Dorsolateral prefrontal cortex (tissue), 120 donors: ENCODE measurements at regions of chr11 and their contacts with region 1.

Region 1: DNA sequence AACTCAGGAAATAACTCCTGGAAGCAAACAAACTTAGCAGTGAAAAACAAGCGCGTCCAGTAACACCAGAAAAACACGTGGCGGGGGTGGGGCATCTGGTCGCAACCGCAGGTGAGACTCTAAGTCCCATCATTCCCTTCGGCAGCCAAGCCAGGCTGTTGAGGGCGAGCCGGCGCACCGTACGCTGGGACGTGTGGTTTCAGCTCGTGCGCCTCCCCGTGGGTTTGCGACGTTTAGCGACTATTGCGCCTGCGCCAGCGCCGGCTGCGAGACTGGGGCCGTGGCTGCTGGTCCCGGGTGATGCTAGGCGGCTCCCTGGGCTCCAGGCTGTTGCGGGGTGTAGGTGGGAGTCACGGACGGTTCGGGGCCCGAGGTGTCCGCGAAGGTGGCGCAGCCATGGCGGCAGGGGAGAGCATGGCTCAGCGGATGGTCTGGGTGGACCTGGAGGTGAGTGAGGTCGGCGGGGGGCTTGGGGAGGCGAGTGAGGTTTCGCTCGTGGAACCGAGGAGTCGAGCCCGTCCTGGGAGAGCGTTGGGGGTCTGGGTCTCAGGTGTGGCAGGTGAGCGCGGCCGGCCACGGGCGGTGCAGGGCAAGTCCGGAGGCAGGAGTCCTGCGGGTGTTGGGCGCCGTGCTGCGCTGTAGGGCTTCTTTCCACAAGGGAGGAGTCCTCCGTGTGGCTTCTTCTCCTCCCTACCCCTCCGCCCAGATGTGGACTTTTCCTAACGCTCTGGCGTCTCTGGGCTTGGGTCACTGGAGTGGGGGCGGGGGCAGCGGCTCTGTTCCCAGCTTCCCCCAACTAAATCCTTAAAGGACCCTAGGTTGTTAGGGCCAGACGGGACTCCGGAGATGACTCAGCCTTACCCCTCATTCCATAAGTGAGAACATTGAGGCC is at the start of gene REXO2:
- DNase-seq: peak; percentile 92 to 97 (median 96)
- H3K4me3 ChIP-seq: peak within 1 kb of the TSS; percentile 62 to 98 (median 91)
- H3K27ac ChIP-seq: peak within 1 kb of the TSS in 49 of 59 donors; percentile 1 to 87 (median 61)
- H3K27me3 ChIP-seq: no peaks in the 10 kb centered on the region
- CTCF ChIP-seq: peak in 54 of 56 donors; percentile 18 to 76 (median 52)
- total RNA-seq, gene REXO2: 28.6 to 62.5 (median 42.4) TPM

Region 2: DNA sequence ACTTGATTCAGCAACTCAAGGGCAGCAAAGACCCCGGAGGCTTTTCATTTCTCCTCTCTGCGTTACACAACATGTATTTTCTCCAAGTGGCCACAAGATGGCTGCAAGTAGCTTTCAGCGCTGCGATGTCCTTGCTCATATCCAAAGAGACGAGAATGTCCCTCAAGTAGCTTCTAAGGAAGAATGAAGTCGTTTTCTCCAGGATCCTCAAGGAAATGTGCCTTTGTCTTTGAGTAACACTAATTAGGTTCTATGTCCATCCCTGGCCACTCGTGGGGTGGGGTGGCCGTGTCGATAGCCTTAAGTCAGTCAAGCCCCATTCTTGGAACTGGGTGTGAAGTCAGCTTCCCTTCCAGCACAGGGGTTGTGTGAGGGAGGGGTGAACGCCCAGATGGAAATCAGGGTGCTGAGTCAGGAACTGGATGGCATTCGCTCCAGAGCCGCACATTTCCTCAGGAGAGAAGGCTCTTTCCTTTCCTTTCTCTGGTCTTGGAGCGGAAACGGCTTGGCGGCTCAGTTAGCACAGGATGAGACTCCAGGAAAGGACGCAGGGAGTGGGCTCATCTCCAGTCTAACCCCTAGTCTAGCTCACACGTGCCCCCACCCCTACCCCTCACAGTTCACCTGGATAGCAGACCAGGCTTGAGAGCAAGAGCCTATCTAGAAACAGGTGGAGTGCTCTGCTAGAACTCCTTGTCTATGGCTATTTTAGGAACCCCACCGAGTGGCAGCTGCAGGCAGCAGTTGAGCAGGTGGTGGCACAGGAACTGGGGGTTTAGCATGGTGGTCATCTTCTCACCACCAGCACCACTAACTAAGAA is 99.0 kb before region 1 on chr11:
- intact Hi-C with region 1: loop called (anchors 5 to 10 kb)
- DNase-seq: peak in 8 of 10 donors; percentile 25 to 65 (median 48)
- H3K4me3 ChIP-seq: peak overlapping the region in 37 of 59 donors; percentile 0 to 57 (median 34)
- H3K27ac ChIP-seq: peak overlapping the region in 5 of 59 donors; percentile 24 to 65 (median 55)
- H3K27me3 ChIP-seq: no peaks in the 10 kb centered on the region
- CTCF ChIP-seq: peak; percentile 68 to 95 (median 81)

Region 3: DNA sequence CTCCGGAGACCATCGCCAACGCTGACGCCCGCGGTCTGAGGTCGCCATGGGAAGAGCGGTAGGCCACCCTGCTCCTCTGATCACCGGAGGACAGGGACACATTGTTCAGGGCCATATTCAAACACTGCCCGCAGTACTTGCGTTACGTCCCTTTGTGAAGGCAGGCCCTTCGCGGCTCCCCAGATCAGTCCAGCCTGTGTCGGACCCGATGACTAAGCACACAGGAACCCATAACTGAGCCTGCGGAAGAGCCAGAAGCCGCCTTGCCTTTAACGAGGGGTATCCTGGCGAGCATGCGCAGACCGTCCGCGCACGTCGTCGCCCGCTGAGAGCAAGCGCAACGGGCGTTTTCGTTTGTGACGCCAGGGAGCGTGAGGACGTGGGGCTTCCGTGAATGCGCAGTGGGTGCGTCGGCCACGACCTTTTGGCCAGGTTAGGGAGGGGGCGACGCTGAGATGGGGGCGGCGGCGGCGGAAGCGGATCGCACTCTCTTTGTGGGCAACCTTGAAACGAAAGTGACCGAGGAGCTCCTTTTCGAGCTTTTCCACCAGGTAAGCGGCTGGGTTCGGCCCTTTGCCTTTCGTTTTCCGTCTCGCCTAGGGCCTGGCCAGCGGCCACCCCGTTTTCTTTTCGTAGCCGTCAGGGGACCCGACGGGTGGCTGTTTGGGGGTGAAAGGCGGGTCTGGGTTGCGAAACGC is 39.1 kb before region 1 on chr11 and contains the starts of genes C11orf71 and RBM7:
- intact Hi-C with region 1: loop called (anchors 1 to 2 kb)
- DNase-seq: peak; percentile 92 to 96 (median 94)
- H3K4me3 ChIP-seq: peak within 1 kb of the TSS; percentile 63 to 99 (median 89)
- H3K27ac ChIP-seq: peak within 1 kb of the TSS; percentile 78 to 99 (median 96)
- H3K27me3 ChIP-seq: no peaks in the 10 kb centered on the region
- CTCF ChIP-seq: peak in 32 of 56 donors; percentile 3 to 52 (median 22)
- total RNA-seq, gene C11orf71: 6.3 to 33.8 (median 12.8) TPM
- total RNA-seq, gene RBM7: 8.3 to 29.9 (median 17.0) TPM